CD8-positive, alpha-beta T cell (primary cell): ENCODE measurements at regions of chrX and their contacts with region 1.

Region 1: GRCh38 chrX:49120099-49120498 is 3.4 kb downstream of the GPKOW start:
- DNase-seq: no peak
- ATAC-seq: no peak
- H3K4me3 ChIP-seq: no peak overlapping the region
- H3K4me3 Mint-ChIP-seq: no peak overlapping the region
- H3K27ac ChIP-seq: no peak overlapping the region
- H3K27ac Mint-ChIP-seq: no peak overlapping the region
- H3K4me1 ChIP-seq: peaks cover 26% of the 10 kb centered on the region
- H3K4me1 Mint-ChIP-seq: peaks cover 48% of the 10 kb centered on the region
- H3K27me3 ChIP-seq: no peaks in the 10 kb centered on the region
- H3K27me3 Mint-ChIP-seq: no peaks in the 10 kb centered on the region
- CTCF ChIP-seq: no peak

Region 2: GRCh38 chrX:48165246-48165645 is 954.9 kb before region 1 on chrX:
- CTCF ChIA-PET with region 1: no interaction called
- POLR2A ChIA-PET with region 1: no interaction called
- intact Hi-C with region 1: no loop called
- DNase-seq: no peak
- ATAC-seq: no peak
- H3K4me3 ChIP-seq: no peak overlapping the region
- H3K4me3 Mint-ChIP-seq: no peak overlapping the region
- H3K27ac ChIP-seq: no peak overlapping the region
- H3K27ac Mint-ChIP-seq: no peak overlapping the region
- H3K4me1 ChIP-seq: no peaks in the 10 kb centered on the region
- H3K4me1 Mint-ChIP-seq: no peaks in the 10 kb centered on the region
- H3K27me3 ChIP-seq: no peaks in the 10 kb centered on the region
- H3K27me3 Mint-ChIP-seq: peaks cover 5% of the 10 kb centered on the region
- CTCF ChIP-seq: no peak

Region 3: GRCh38 chrX:48636776-48637175 is 483.3 kb before region 1 on chrX:
- CTCF ChIA-PET with region 1: no interaction called
- POLR2A ChIA-PET with region 1: no interaction called
- intact Hi-C with region 1: no loop called
- DNase-seq: no peak
- ATAC-seq: no peak
- H3K4me3 ChIP-seq: no peak overlapping the region
- H3K4me3 Mint-ChIP-seq: no peak overlapping the region
- H3K27ac ChIP-seq: no peak overlapping the region
- H3K27ac Mint-ChIP-seq: no peak overlapping the region
- H3K4me1 ChIP-seq: peaks cover 5% of the 10 kb centered on the region
- H3K4me1 Mint-ChIP-seq: peaks cover 4% of the 10 kb centered on the region
- H3K27me3 ChIP-seq: no peaks in the 10 kb centered on the region
- H3K27me3 Mint-ChIP-seq: no peaks in the 10 kb centered on the region
- CTCF ChIP-seq: no peak

Region 4: GRCh38 chrX:49073601-49074571 is 46.2 kb before region 1 on chrX and contains the start of gene PRAF2:
- CTCF ChIA-PET with region 1: no interaction called
- POLR2A ChIA-PET with region 1: no interaction called
- intact Hi-C with region 1: loop called (anchors 1 kb)
- DNase-seq: peak; percentile 74 to 95 (median 89)
- ATAC-seq: peak; percentile 96
- H3K4me3 ChIP-seq: peak within 1 kb of the TSS; percentile 64 to 76
- H3K4me3 Mint-ChIP-seq: peak within 1 kb of the TSS; percentile 79
- H3K27ac ChIP-seq: peak within 1 kb of the TSS; percentile 81 to 82
- H3K27ac Mint-ChIP-seq: peak within 1 kb of the TSS; percentile 91
- H3K4me1 ChIP-seq: peaks cover 13% of the 10 kb centered on the region
- H3K4me1 Mint-ChIP-seq: peaks cover 17% of the 10 kb centered on the region
- H3K27me3 ChIP-seq: no peaks in the 10 kb centered on the region
- H3K27me3 Mint-ChIP-seq: no peaks in the 10 kb centered on the region
- CTCF ChIP-seq: no peak
- total RNA-seq, gene PRAF2: 16.7 to 17.5 TPM

Region 5: DNA sequence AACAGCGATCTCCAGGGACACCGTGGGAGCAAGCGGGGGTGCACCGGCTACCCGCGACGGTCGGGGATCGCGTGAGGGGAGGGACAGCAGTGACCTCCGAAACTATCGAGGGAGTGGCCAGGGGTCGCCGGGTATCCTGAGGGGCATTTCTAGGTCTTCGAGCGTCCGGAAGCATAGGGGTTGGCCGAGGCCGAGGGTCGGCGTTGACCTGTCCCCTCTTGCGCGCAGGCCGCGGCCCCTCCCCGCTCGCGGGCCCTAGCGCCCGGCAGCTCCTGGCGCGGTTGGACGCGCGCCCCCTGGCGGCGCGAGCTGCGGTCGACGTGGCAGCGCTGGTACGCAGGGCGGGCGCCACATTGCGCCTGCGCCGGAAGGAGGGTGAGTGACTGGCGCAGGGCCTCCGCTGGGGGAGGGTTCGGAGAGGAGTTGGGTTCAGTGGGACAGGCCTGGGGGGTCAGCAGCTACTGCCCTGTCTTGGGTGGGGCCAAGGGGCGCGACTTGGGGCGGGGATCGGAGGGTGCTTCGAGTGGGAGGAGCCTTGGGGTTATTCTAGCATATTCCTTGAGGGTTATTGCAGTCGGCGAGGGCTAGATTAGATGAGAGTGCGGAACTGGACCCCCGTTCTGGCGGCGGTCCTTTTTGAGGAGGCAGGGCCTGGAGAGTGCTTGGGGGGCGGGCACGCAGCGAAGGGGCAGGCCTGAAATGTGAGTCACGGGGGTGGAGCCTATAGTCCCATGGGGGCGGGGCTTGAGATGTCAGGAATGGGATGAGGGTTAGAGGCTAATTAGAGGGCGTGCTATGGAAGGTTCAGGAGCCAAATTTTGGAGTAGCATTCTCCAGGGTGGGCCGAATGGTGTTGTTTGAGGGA is 43.7 kb after region 1 on chrX:
- CTCF ChIA-PET with region 1: no interaction called
- POLR2A ChIA-PET with region 1: no interaction called
- intact Hi-C with region 1: loop called (anchors 5 kb)
- DNase-seq: peak in 8 of 9 experiments; percentile 67 to 91 (median 82)
- ATAC-seq: peak; percentile 54
- H3K4me3 ChIP-seq: peak overlapping the region; percentile 49
- H3K4me3 Mint-ChIP-seq: peak overlapping the region; percentile 81
- H3K27ac ChIP-seq: peak overlapping the region; percentile 56 to 84
- H3K27ac Mint-ChIP-seq: peak overlapping the region; percentile 92
- H3K4me1 ChIP-seq: peaks cover 21% of the 10 kb centered on the region
- H3K4me1 Mint-ChIP-seq: peaks cover 27% of the 10 kb centered on the region
- H3K27me3 ChIP-seq: no peaks in the 10 kb centered on the region
- H3K27me3 Mint-ChIP-seq: no peaks in the 10 kb centered on the region
- CTCF ChIP-seq: peak; percentile 57

Region 6: GRCh38 chrX:49199906-49200771 is 80.0 kb after region 1 on chrX and contains the start of gene SYP:
- CTCF ChIA-PET with region 1: no interaction called
- POLR2A ChIA-PET with region 1: no interaction called
- intact Hi-C with region 1: loop called in 1 of 2 experiments (anchors 1 kb)
- DNase-seq: peak; percentile 71 to 92 (median 88)
- ATAC-seq: peak; percentile 99
- H3K4me3 ChIP-seq: peak within 1 kb of the TSS; percentile 39 to 50
- H3K4me3 Mint-ChIP-seq: peak within 1 kb of the TSS; percentile 72
- H3K27ac ChIP-seq: peak within 1 kb of the TSS; percentile 53 to 54
- H3K27ac Mint-ChIP-seq: peak within 1 kb of the TSS; percentile 82
- H3K4me1 ChIP-seq: no peaks in the 10 kb centered on the region
- H3K4me1 Mint-ChIP-seq: peaks cover 14% of the 10 kb centered on the region
- H3K27me3 ChIP-seq: no peaks in the 10 kb centered on the region
- H3K27me3 Mint-ChIP-seq: no peaks in the 10 kb centered on the region
- CTCF ChIP-seq: no peak
- total RNA-seq, gene SYP: 0.44 to 0.65 TPM